Mammary epithelial cell (primary cell): ENCODE measurements at regions of chr11 and their contacts with region 1.

Region 1: GRCh38 chr11:93234602-93235207 is 36.9 kb upstream of the SLC36A4 start:
- DNase-seq: peak; percentile 54
- H3K4me3 ChIP-seq: no peak overlapping the region
- H3K27ac ChIP-seq: no peak overlapping the region
- H3K4me1 ChIP-seq: no peaks in the 10 kb centered on the region
- H3K27me3 ChIP-seq: no peaks in the 10 kb centered on the region
- CTCF ChIP-seq: peak; percentile 97 to 98

Region 2: DNA sequence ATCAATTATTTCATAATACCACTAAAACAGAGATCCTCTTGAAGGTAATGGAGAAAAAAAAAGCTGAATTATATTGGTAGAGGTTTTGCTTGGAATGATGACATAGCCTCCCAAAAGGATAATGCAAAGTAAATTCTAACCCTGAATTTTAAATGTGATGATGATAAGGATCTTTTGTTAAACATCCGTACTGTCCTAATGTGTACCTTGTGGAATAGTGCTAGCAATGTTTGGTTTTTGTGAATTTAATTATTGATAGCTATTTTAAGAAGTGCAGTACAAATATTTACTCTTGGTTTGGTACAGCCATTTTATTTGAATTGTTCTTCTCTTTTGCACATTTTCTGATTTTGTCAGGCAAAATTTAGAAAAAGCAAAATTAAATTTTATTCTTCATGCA is 121.8 kb after region 1 on chr11:
- CTCF ChIA-PET with region 1: no interaction called
- dilution Hi-C with region 1: no loop called
- in situ Hi-C with region 1: no loop called
- intact Hi-C with region 1: no loop called
- DNase-seq: no peak
- H3K4me3 ChIP-seq: no peak overlapping the region
- H3K27ac ChIP-seq: no peak overlapping the region
- H3K4me1 ChIP-seq: no peaks in the 10 kb centered on the region
- H3K27me3 ChIP-seq: no peaks in the 10 kb centered on the region
- CTCF ChIP-seq: no peak

Region 3: DNA sequence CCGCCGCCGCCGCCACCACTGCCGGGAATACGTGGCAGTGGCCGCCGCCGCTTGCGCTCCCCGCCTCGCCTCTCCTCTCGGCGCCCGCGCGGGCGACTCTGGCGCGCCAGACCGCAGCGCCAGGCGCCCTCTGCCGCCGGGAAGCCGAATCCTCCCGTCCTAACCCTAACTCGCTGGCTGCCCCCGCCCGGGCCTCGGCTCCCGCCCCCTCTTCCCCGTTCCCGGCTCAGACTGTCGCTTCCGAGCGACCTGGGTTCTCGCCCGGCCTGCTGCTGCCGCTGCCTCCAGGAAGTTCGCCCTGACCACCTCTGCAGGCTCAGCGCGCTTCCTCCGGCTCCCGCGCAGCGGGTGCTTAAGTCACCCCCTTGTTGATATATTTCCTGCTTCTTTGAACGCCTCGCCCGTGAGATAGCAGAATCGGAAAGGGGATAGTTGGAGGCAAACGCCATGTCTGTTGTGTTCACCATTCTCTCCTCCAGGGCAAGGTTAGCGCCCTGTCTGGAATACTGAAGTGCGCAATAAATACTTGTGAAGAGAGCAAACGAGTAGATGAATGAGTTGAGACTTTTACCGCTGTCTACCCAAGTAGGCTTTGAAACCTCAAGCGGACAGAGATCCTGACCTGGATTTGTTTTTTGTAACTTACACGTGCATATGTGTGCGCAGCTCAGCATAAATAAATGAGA is 308.7 kb after region 1 on chr11 and contains the start of gene SMCO4:
- CTCF ChIA-PET with region 1: interaction called, 4 read pairs
- dilution Hi-C with region 1: no loop called
- in situ Hi-C with region 1: no loop called
- intact Hi-C with region 1: loop called (anchors 1 kb)
- DNase-seq: peak; percentile 75
- H3K4me3 ChIP-seq: peak within 1 kb of the TSS; percentile 51 to 66 (median 52)
- H3K27ac ChIP-seq: no peak within 1 kb of the TSS
- H3K4me1 ChIP-seq: peaks cover 7% of the 10 kb centered on the region
- H3K27me3 ChIP-seq: no peaks in the 10 kb centered on the region
- CTCF ChIP-seq: peak; percentile 15 to 72
- total RNA-seq, gene SMCO4: 2.2 to 3.6 TPM